ENCODE measurements at regions of chr19 and their contacts with region 1.

Region 1: DNA sequence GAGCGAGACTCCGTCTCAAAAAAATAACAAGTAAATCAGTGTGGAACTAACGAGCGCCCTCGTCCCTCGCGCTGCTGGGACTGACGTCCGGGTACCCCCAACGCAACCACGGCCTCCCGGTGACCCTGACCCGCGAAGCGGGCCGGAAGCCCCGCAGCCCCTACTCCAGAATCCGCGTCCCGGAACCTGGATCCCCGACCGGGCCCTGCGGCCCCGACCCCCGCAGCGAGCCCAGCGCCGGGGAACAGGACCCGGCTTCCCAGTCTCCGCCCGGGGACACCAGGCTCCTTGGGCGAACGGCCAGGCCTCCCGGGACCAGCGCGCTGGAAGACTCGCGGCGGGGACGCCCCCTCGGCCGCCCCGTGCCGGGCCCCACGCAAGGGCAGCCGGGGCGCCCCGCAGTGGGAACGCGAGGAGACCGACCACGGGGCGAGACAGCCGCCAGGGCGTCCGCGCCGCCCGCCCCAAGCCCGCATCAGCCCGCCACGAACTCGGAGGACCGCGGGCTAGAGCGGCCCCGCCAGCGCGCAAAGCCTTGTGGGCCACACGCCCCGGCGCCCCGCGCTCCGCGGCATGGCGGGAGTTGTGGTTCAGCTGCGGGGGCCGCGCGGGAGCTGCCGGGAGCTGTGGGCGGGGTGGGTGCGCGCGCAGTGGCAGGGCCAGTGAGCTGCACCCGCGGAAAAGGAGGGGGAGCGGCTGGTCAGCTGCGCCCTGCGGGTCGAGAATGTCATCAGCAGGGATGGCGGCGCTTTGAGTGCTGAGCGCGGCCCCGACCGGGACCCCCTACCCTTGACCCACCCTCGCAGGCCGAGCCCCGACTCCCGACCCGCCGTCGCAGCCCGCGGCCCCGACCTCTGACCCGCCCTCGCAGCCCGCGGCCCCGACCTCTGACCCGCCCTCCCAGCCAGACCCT is 7.5 kb upstream of the MADCAM1 start:
- DNase-seq: peak; percentile 87
- H3K4me3 Mint-ChIP-seq: peak overlapping the region; percentile 88
- H3K27ac Mint-ChIP-seq: peak overlapping the region; percentile 89
- H3K4me1 Mint-ChIP-seq: no peaks in the 10 kb centered on the region
- H3K27me3 Mint-ChIP-seq: peaks cover 10% of the 10 kb centered on the region

Region 2: DNA sequence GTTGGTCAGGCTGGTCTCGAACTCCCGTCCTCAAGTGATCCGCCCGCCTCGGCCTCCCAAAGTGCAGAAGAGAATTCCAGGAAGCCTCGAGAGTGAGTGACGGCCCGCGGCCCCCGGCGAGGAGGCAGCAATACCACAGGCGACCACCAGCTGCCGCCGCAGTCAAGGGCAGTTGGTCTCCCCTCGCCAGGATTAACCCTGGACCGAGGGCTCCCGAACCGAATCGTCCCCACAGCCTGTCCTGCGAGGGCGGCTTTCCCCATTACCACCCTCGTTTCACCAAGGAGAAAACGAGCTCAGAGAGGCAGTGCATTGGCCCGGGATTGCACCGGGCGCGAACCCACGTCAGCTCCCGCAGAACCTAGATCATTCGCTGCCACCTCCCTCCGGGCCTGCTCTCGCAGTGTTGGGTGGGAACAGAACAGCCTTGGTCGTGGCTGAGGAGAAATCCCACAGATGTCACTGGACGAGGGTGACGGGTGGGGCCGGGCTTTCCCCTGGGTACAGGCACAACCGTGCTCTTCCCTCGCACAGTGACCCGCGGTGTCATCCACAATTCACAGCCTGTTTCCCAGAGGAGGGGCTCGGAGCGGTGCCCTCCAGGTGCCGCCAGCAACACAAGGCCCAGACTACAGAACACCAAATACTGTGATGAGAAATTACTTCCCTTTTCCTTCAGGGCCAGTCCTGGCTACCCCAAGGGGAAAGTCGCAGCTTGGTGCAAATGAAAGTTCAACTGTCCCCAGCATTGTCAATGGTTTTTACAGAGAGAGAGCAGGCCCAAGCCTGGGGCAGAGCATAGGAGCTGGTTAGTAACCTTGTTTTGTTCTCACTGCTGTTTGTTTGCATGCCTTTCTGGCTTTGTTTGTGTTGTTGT is 104.6 kb before region 1 on chr19:
- intact Hi-C with region 1: loop called (anchors 1 kb)
- DNase-seq: no peak
- H3K4me3 Mint-ChIP-seq: no peak overlapping the region
- H3K27ac Mint-ChIP-seq: no peak overlapping the region
- H3K4me1 Mint-ChIP-seq: peaks cover 26% of the 10 kb centered on the region
- H3K27me3 Mint-ChIP-seq: peaks cover 21% of the 10 kb centered on the region

Measured in activated T-helper 1 cell treated with anti-CD3 and anti-CD28 coated beads, Interleukin-12 subunit alpha, Interleukin-12 subunit beta, Interleukin-2, Interleukin-4 antibody, amounts not matched to agents 30 ng/mL and 10 ng/mL and 1 ng/mL, durations not matched to agents 14 hours and 24 hours and 36 hours (primary cell).